Psoas muscle (tissue), 8 donors: ENCODE measurements at regions of chr16 and their contacts with region 1.

Region 1: GRCh38 chr16:75043175-75043895 is 44.5 kb downstream of the ZNRF1 start:
- DNase-seq: no peak
- ATAC-seq: peak in 1 of 4 donors; percentile 4
- H3K4me3 ChIP-seq: no peak overlapping the region
- H3K27ac ChIP-seq: peak overlapping the region; percentile 74
- H3K4me1 ChIP-seq: peaks cover 58% of the 10 kb centered on the region
- H3K27me3 ChIP-seq: no peaks in the 10 kb centered on the region
- CTCF ChIP-seq: no peak

Region 2: GRCh38 chr16:74998481-74999218 is 44.7 kb before region 1 on chr16 and contains the start of gene ZNRF1:
- intact Hi-C with region 1: loop called (anchors 5 kb)
- DNase-seq: peak; percentile 87 to 93
- ATAC-seq: peak; percentile 91 to 95 (median 92)
- H3K4me3 ChIP-seq: peak within 1 kb of the TSS; percentile 97
- H3K27ac ChIP-seq: peak within 1 kb of the TSS; percentile 84
- H3K4me1 ChIP-seq: peaks cover 36% of the 10 kb centered on the region
- H3K27me3 ChIP-seq: no peaks in the 10 kb centered on the region
- CTCF ChIP-seq: peak; percentile 82
- total RNA-seq, gene ZNRF1: 21.1 to 57.0 (median 36.1) TPM

Region 3: GRCh38 chr16:75087375-75087979 is 44.1 kb after region 1 on chr16:
- intact Hi-C with region 1: loop called in 1 of 2 experiments (anchors 5 kb)
- DNase-seq: peak in 1 of 2 donors; percentile 71
- ATAC-seq: peak; percentile 89 to 95 (median 92)
- H3K4me3 ChIP-seq: peak overlapping the region; percentile 46
- H3K27ac ChIP-seq: peak overlapping the region; percentile 85
- H3K4me1 ChIP-seq: peaks cover 68% of the 10 kb centered on the region
- H3K27me3 ChIP-seq: no peaks in the 10 kb centered on the region
- CTCF ChIP-seq: no peak